ENCODE measurements at regions of chr7 and their contacts with region 1.

Region 1: DNA sequence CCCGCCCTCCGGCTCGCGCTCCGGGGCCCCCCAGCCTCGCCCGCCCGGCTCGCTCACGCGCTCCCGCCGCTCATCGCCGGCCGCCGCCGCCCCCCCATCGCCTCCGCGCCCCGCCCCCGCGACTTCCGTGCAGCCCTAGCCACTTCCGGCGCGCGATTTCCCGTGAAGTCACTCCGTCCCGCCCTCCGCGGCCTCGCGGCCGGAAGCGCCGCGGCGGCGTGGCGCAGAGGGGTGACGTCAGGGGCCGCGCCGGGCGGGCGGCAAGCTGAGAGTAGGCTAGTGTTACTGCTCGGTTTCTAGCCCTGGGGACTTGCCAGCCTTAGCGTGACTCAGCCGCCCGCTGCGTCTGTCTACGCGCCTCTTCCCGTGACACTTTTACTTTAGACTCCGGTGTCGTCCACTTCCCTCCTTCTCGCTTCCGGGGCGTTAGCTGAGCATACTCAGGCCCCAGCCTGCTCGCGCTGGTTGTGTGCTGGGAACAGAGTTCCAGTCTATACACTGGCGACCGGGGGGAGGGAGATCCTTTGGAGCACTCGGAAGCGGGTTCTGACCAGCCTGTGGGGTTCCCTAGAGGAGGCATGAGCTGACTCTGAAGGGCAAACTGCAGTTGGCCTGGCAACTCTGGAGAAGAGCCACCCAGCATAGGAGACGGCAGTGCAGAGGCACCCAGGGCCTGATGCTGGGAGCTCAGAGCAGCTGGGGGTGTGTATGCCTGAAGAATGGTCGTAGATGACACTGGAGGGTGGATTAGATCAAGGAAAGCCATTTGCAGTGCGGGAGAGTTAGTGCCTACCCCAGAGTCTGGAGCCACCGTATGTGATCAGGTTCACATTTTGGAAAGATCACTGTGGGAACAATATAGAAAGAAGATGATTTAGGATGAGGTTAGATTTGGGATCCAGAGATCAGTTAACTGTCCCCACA is at the start of gene PURB:
- DNase-seq: peak; percentile 94 to 98
- ATAC-seq: peak; percentile 94 to 95
- H3K4me3 ChIP-seq: peak within 1 kb of the TSS; percentile 73 to 100 (median 88)
- H3K27ac ChIP-seq: peak within 1 kb of the TSS; percentile 91 to 100 (median 96)
- H3K4me1 ChIP-seq: peaks cover 45 to 47% of the 10 kb centered on the region in 2 donors
- H3K27me3 ChIP-seq: no peaks in the 10 kb centered on the region
- CTCF ChIP-seq: peak in 1 of 5 experiments; percentile 19
- POLR2A ChIP-seq: peak; percentile 95 to 96
- total RNA-seq, gene PURB: 13.0 to 18.7 (median 15.9) TPM

Region 2: GRCh38 chr7:44606450-44607254 is 279.0 kb before region 1 on chr7 and contains the start of gene OGDH:
- in situ Hi-C with region 1: no loop called
- intact Hi-C with region 1: loop called (anchors 1 kb)
- DNase-seq: peak; percentile 98
- ATAC-seq: peak; percentile 88 to 92
- H3K4me3 ChIP-seq: peak within 1 kb of the TSS; percentile 72 to 88 (median 82)
- H3K27ac ChIP-seq: peak within 1 kb of the TSS; percentile 91 to 99 (median 96)
- H3K4me1 ChIP-seq: peaks cover 13 to 14% of the 10 kb centered on the region in 2 donors
- H3K27me3 ChIP-seq: no peaks in the 10 kb centered on the region
- CTCF ChIP-seq: peak in 1 of 5 experiments; percentile 23
- POLR2A ChIP-seq: peak; percentile 98
- total RNA-seq, gene OGDH: 224 to 462 (median 396) TPM

Region 3: GRCh38 chr7:44712012-44712411 is 173.6 kb before region 1 on chr7:
- in situ Hi-C with region 1: no loop called
- intact Hi-C with region 1: no loop called
- DNase-seq: no peak
- ATAC-seq: no peak
- H3K4me3 ChIP-seq: no peak overlapping the region
- H3K27ac ChIP-seq: peak overlapping the region in 3 of 4 donors; percentile 22 to 44 (median 26)
- H3K4me1 ChIP-seq: peaks cover 3 to 10% of the 10 kb centered on the region in 2 donors
- H3K27me3 ChIP-seq: no peaks in the 10 kb centered on the region
- CTCF ChIP-seq: no peak
- POLR2A ChIP-seq: no peak

Region 4: GRCh38 chr7:44847508-44847920 is 38.1 kb before region 1 on chr7:
- in situ Hi-C with region 1: no loop called
- intact Hi-C with region 1: loop called (anchors 1 kb)
- DNase-seq: peak; percentile 82 to 87
- ATAC-seq: peak; percentile 78 to 82
- H3K4me3 ChIP-seq: peak overlapping the region; percentile 65 to 72 (median 66)
- H3K27ac ChIP-seq: peak overlapping the region; percentile 90 to 93 (median 92)
- H3K4me1 ChIP-seq: peaks cover 24 to 43% of the 10 kb centered on the region in 2 donors
- H3K27me3 ChIP-seq: no peaks in the 10 kb centered on the region
- CTCF ChIP-seq: peak; percentile 92 to 98 (median 98)
- POLR2A ChIP-seq: no peak

Region 5: DNA sequence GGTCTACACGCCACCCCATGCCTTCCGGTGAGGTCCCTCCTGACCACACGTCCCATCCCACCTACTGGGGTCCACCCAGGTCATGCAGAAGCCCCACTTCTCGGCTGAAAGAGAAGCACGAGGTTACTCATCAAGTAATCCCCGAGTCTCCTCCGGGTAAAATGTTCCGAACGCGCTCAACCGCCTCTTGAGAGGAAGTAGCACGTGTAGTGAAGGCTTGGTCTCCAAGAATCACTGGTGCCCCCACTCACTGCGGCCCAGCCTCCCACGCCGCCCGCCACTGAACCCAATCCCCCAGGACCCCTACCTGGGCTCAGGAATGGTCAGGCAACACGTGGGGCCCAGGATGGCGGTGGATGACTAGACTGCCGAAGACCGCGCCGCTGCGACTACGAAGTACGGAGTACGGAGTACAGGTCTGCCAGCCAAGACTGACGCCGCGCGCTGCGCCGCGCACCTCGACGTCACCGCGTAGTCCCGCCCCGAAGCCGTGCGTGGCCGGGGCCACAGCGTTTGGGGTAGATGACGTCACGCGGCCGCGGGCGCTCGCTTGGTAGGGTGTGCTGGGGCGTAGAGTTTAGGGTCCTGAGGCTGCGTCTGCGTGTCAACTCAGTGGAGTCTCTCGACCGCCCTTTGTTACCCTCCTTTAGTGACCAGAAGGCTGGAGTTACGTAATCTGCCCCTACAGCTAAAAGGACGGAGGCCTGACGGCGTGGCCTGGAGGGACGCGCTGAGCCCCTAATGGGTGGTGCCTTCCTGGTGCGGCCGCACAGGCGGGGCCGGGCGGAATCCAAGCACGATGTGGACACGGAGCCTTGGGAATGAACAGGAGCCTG is 100.8 kb after region 1 on chr7:
- in situ Hi-C with region 1: no loop called
- intact Hi-C with region 1: loop called (anchors 2 kb)
- DNase-seq: peak; percentile 82 to 90
- ATAC-seq: peak; percentile 96 to 97
- H3K4me3 ChIP-seq: peak overlapping the region; percentile 60 to 77 (median 69)
- H3K27ac ChIP-seq: peak overlapping the region; percentile 92 to 98 (median 94)
- H3K4me1 ChIP-seq: peaks cover 18 to 22% of the 10 kb centered on the region in 2 donors
- H3K27me3 ChIP-seq: no peaks in the 10 kb centered on the region
- CTCF ChIP-seq: no peak
- POLR2A ChIP-seq: peak; percentile 90 to 94

Region 6: DNA sequence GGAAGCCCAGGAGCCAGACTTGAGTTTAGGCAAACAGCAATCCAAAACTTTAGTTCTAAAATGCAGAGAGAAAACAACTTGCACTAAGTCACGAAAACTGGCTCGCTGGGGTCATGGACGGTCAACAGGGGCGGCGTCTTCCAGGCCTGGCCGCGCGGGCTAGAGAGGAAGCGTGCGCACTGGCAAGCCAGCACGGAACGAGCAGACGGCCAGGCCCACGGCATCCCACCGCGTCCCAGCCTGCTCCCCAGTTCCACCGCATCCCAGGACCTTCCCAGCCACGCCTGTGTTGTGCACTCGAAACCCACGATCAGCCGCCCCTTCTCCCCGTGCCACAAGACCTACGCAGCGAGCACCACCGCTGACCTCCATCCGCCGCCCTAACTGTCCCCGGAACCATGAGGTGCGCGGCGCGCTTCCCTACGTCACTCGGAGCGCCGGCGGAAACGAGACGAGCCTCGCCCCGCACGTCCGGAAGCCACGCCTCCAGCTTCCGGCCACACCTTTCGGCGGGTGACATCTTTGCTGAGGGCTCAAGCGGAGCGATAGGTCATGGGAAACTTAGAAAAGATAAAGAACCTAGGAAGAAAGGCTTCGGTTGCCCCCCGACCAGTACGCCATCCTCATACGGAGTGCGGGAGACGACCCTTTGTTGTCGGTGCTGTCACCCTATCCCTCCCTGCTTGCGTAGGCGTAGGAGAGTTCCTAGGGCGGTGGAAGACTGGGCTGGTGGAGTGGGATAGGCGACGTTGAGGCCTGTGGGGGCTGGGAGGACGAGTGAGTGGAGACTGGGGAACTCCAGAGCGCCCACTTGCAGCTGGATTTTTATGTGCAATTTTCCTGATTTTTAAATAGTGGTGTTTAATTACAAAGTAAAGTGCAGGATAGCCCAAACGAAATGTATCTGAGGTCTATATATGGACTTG is 225.9 kb after region 1 on chr7 and contains the start of gene TBRG4:
- in situ Hi-C with region 1: no loop called
- intact Hi-C with region 1: loop called (anchors 5 kb)
- DNase-seq: peak; percentile 90 to 91
- ATAC-seq: peak; percentile 96 to 97
- H3K4me3 ChIP-seq: peak within 1 kb of the TSS; percentile 87 to 95 (median 91)
- H3K27ac ChIP-seq: peak within 1 kb of the TSS; percentile 93 to 99 (median 95)
- H3K4me1 ChIP-seq: peaks cover 33 to 47% of the 10 kb centered on the region in 2 donors
- H3K27me3 ChIP-seq: no peaks in the 10 kb centered on the region
- CTCF ChIP-seq: peak in 2 of 5 experiments; percentile 22 to 28
- POLR2A ChIP-seq: peak; percentile 86 to 92
- total RNA-seq, gene TBRG4: 74.3 to 105 (median 92.7) TPM